Activated CD8-positive, alpha-beta T cell treated with anti-CD3 and anti-CD28 coated beads, Interleukin-2, amount 10 ng/mL, durations not matched to agents 7 days and 5 days (primary cell): ENCODE measurements at regions of chr1 and their contacts with region 1.

Region 1: GRCh38 chr1:47262787-47263413 is 30.9 kb upstream of the TAL1 start:
- DNase-seq: peak; percentile 65
- ATAC-seq: peak; percentile 36
- H3K4me3 Mint-ChIP-seq: no peak overlapping the region
- H3K27ac Mint-ChIP-seq: no peak overlapping the region
- H3K4me1 Mint-ChIP-seq: no peaks in the 10 kb centered on the region
- H3K27me3 Mint-ChIP-seq: no peaks in the 10 kb centered on the region

Region 2: DNA sequence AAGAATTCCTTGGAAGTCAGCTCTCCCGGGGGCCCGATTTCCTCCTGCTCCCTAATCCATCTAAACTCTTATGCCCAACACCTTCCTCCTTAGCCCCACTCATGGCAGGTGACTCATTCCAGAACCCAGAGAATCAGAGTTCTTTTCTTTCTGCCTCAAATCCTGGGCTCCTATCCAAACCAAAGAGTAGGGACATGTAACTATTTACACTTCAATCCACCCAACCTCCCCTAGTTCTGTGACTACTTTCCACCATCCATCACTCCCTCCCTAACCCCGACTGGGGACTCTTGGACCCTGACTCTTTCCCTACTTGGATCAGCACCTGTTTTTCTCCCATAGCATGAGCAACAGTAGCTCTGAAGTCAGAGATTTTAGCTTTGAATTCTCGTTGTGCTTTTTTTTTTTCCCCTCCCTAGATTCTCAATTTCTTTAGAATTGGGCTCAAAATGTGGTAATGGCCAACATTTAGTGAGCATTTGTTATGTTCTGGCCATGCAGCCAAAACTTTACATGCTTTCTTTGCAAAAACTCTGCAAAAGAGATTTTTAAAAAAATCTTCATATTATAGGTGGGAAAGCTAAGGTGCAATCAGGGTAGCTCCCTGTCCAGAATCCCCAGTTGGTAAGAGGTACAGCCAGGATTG is 314.1 kb before region 1 on chr1:
- CTCF ChIA-PET with region 1: no interaction called
- POLR2A ChIA-PET with region 1: no interaction called
- DNase-seq: no peak
- ATAC-seq: no peak
- H3K4me3 Mint-ChIP-seq: no peak overlapping the region
- H3K27ac Mint-ChIP-seq: no peak overlapping the region
- H3K4me1 Mint-ChIP-seq: peaks cover 15% of the 10 kb centered on the region
- H3K27me3 Mint-ChIP-seq: peaks cover 20% of the 10 kb centered on the region

Region 3: GRCh38 chr1:47137925-47138615 is 124.8 kb before region 1 on chr1:
- CTCF ChIA-PET with region 1: no interaction called
- POLR2A ChIA-PET with region 1: no interaction called
- DNase-seq: no peak
- ATAC-seq: no peak
- H3K4me3 Mint-ChIP-seq: no peak overlapping the region
- H3K27ac Mint-ChIP-seq: no peak overlapping the region
- H3K4me1 Mint-ChIP-seq: no peaks in the 10 kb centered on the region
- H3K27me3 Mint-ChIP-seq: peaks cover 4% of the 10 kb centered on the region

Region 4: GRCh38 chr1:47179017-47179987 is 83.6 kb before region 1 on chr1:
- CTCF ChIA-PET with region 1: interaction called, 40 read pairs
- POLR2A ChIA-PET with region 1: no interaction called
- DNase-seq: peak; percentile 85
- ATAC-seq: peak; percentile 85
- H3K4me3 Mint-ChIP-seq: peak overlapping the region; percentile 80
- H3K27ac Mint-ChIP-seq: peak overlapping the region; percentile 88
- H3K4me1 Mint-ChIP-seq: peaks cover 8% of the 10 kb centered on the region
- H3K27me3 Mint-ChIP-seq: peaks cover 26% of the 10 kb centered on the region

Region 5: GRCh38 chr1:47192458-47193384 is 70.2 kb before region 1 on chr1:
- CTCF ChIA-PET with region 1: interaction called, 70 read pairs
- POLR2A ChIA-PET with region 1: no interaction called
- DNase-seq: peak; percentile 75
- ATAC-seq: peak; percentile 77
- H3K4me3 Mint-ChIP-seq: no peak overlapping the region
- H3K27ac Mint-ChIP-seq: no peak overlapping the region
- H3K4me1 Mint-ChIP-seq: no peaks in the 10 kb centered on the region
- H3K27me3 Mint-ChIP-seq: peaks cover 3% of the 10 kb centered on the region

Region 6: DNA sequence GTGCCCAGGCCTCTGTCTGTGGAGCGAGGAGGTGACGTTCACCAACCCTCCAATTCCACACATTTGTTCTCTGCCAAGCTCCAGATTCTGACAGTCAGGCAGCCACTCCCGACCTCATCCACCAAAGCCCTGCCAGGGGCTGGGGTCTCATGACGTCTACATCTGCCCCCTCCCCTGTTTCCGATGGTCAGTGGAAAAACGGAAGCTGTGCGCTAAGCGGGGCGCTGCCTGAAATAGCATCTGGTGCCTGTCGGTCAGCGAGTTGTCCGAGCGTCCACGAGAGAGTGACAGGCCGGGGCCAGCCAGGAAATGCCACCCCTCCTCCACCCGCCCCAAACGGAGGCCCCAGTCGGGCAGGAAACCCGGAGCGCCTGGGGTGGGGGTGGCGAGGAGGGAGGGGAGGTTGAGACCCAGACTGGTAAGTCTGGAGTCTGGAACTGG is 27.6 kb before region 1 on chr1:
- CTCF ChIA-PET with region 1: interaction called, 11 read pairs
- POLR2A ChIA-PET with region 1: no interaction called
- DNase-seq: no peak
- ATAC-seq: no peak
- H3K4me3 Mint-ChIP-seq: no peak overlapping the region
- H3K27ac Mint-ChIP-seq: no peak overlapping the region
- H3K4me1 Mint-ChIP-seq: peaks cover 33% of the 10 kb centered on the region
- H3K27me3 Mint-ChIP-seq: peaks cover 61% of the 10 kb centered on the region

Region 7: GRCh38 chr1:47252369-47252768 is 10.5 kb before region 1 on chr1:
- CTCF ChIA-PET with region 1: interaction called, 17 read pairs
- POLR2A ChIA-PET with region 1: no interaction called
- DNase-seq: no peak
- ATAC-seq: no peak
- H3K4me3 Mint-ChIP-seq: no peak overlapping the region
- H3K27ac Mint-ChIP-seq: no peak overlapping the region
- H3K4me1 Mint-ChIP-seq: no peaks in the 10 kb centered on the region
- H3K27me3 Mint-ChIP-seq: no peaks in the 10 kb centered on the region

Region 8: GRCh38 chr1:47280157-47280556 is 17.3 kb after region 1 on chr1:
- CTCF ChIA-PET with region 1: interaction called, 13 read pairs
- POLR2A ChIA-PET with region 1: no interaction called
- DNase-seq: no peak
- ATAC-seq: no peak
- H3K4me3 Mint-ChIP-seq: no peak overlapping the region
- H3K27ac Mint-ChIP-seq: no peak overlapping the region
- H3K4me1 Mint-ChIP-seq: peaks cover 7% of the 10 kb centered on the region
- H3K27me3 Mint-ChIP-seq: no peaks in the 10 kb centered on the region

Region 9: GRCh38 chr1:47313915-47314664 is 51.2 kb after region 1 on chr1 and contains the start of gene STIL:
- CTCF ChIA-PET with region 1: interaction called, 12 read pairs
- POLR2A ChIA-PET with region 1: interaction called, 3 read pairs
- DNase-seq: peak; percentile 99
- ATAC-seq: peak; percentile 97
- H3K4me3 Mint-ChIP-seq: peak within 1 kb of the TSS; percentile 85
- H3K27ac Mint-ChIP-seq: peak within 1 kb of the TSS; percentile 93
- H3K4me1 Mint-ChIP-seq: peaks cover 23% of the 10 kb centered on the region
- H3K27me3 Mint-ChIP-seq: no peaks in the 10 kb centered on the region
- total RNA-seq, gene STIL: 48.0 to 50.1 TPM